Activated CD4-positive, alpha-beta memory T cell treated with anti-CD3 and anti-CD28 coated beads, Interleukin-2, amount 10 ng/mL, durations not matched to agents 7 days and 5 days (primary cell): ENCODE measurements at regions of chr17 and their contacts with region 1.

Region 1: GRCh38 chr17:2380226-2380922 is 20.5 kb downstream of the MNT start:
- DNase-seq: no peak
- H3K4me3 Mint-ChIP-seq: no peak overlapping the region
- H3K27ac Mint-ChIP-seq: no peak overlapping the region
- H3K4me1 Mint-ChIP-seq: no peaks in the 10 kb centered on the region
- H3K27me3 Mint-ChIP-seq: no peaks in the 10 kb centered on the region

Region 2: DNA sequence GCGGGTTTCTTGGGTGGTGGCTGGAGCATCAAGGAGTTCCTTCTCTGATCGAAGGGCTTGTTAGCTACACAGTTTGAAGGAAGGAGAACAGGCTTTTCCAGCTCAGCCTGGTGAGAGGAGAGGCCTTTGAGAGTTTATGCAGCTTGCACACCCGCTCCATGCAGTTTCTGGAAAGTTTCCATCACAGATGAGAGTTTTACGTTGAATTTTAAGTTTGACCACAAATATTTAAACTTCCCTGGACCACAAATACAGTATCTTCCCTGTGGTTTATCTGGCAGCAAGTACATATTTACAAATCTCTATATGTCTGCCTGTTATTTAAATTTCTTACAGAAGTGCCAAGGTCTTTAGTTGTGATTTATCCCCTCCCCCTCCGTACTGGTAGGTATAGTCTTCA is 268.7 kb before region 1 on chr17:
- CTCF ChIA-PET with region 1: no interaction called
- POLR2A ChIA-PET with region 1: no interaction called
- DNase-seq: no peak
- H3K4me3 Mint-ChIP-seq: no peak overlapping the region
- H3K27ac Mint-ChIP-seq: no peak overlapping the region
- H3K4me1 Mint-ChIP-seq: peaks cover 8% of the 10 kb centered on the region
- H3K27me3 Mint-ChIP-seq: no peaks in the 10 kb centered on the region

Region 3: GRCh38 chr17:2253768-2254406 is 126.5 kb before region 1 on chr17:
- CTCF ChIA-PET with region 1: no interaction called
- POLR2A ChIA-PET with region 1: no interaction called
- DNase-seq: peak; percentile 54
- H3K4me3 Mint-ChIP-seq: peak overlapping the region; percentile 14
- H3K27ac Mint-ChIP-seq: peak overlapping the region; percentile 89
- H3K4me1 Mint-ChIP-seq: peaks cover 74% of the 10 kb centered on the region
- H3K27me3 Mint-ChIP-seq: no peaks in the 10 kb centered on the region

Region 4: DNA sequence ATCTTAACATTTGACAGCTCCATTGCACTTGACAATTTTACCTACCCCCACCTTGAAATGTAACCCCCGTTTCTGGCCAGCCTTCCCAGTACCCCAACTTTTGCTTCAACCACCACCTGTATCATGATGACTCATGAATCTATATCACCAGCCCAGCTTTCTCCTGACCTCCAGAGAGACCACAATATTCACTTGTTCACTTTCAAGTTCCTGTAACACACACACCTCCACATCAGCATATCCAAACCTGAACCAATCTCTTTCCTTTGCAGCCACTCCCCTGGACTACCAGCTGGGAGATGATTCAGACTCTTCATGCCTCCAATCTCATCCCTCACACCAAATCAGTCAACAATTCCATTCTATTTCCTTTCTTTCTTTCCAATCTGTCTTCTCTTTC is 84.8 kb before region 1 on chr17:
- CTCF ChIA-PET with region 1: no interaction called
- POLR2A ChIA-PET with region 1: no interaction called
- DNase-seq: no peak
- H3K4me3 Mint-ChIP-seq: no peak overlapping the region
- H3K27ac Mint-ChIP-seq: peak overlapping the region; percentile 1
- H3K4me1 Mint-ChIP-seq: peaks cover 33% of the 10 kb centered on the region
- H3K27me3 Mint-ChIP-seq: no peaks in the 10 kb centered on the region

Region 5: DNA sequence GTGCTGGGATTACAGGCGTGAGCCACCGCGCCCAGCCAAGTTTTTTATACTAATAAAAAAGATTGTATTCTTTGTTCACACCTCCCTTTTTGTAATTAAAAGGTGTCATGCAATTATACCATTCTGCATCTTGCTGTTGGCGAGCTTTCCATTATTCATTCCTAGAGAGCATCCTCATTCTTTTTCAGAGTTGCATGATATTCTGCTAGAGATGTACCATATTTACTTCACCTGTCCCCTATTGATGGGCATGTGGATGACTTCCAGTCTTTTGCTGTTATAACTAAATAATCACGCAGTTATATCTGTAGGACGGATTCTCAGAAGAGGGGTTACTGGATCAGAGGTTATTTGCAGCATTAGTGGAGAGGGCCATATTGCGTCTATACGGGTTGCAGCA is 26.1 kb before region 1 on chr17:
- CTCF ChIA-PET with region 1: interaction called, 16 read pairs
- POLR2A ChIA-PET with region 1: interaction called, 3 read pairs
- DNase-seq: no peak
- H3K4me3 Mint-ChIP-seq: no peak overlapping the region
- H3K27ac Mint-ChIP-seq: peak overlapping the region; percentile 79
- H3K4me1 Mint-ChIP-seq: peaks cover 17% of the 10 kb centered on the region
- H3K27me3 Mint-ChIP-seq: no peaks in the 10 kb centered on the region

Region 6: DNA sequence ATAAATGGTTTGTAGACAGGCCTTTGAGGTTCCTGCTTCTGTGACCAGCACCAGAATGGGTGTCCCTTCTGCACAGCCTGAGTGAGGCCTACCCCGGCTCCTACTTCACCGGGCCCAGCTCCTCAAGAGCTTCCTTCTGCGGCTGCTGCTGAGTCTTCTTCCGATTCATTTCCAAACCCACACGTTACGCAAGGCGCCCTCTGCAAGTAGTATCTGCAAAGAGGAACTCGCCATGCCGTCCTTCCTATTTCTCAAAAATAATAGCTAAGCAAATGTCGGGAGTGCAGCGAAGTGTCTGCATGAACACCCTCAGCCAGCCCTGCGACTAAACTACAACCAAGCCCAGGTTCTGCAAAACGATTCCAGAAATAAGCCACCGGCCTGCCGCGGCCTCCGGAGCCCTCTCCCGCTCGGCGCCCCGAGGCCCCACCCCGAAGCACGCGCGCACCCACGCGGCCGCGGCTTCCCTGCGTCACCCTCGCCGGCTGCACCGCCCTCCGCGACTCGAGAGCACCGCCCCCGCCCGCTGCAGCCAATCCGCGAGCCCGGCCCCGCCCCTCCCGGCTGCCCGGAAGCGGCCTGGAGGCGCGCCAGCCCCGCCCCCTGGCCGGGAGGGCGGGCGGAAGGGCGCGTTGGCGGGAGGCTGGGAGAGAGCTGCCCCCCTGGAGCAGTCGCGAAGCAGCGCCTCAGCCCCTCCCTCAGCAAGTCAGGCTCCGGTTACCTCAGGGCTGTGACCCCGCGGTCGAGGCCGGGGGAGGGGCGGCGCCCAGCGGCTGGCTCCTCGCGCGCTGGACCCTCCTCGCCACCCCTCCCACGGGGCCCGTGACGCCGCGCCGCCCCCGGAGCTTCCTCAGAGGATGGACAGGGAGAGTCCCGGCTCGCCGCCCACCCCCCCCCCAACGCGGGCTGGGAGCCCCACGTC is 12.1 kb after region 1 on chr17:
- CTCF ChIA-PET with region 1: interaction called, 61 read pairs
- POLR2A ChIA-PET with region 1: interaction called, 51 read pairs
- DNase-seq: peak; percentile 97
- H3K4me3 Mint-ChIP-seq: peak overlapping the region; percentile 90
- H3K27ac Mint-ChIP-seq: peak overlapping the region; percentile 90
- H3K4me1 Mint-ChIP-seq: peaks cover 67% of the 10 kb centered on the region
- H3K27me3 Mint-ChIP-seq: no peaks in the 10 kb centered on the region

Region 7: GRCh38 chr17:2401426-2402221 is 21.2 kb after region 1 on chr17:
- CTCF ChIA-PET with region 1: interaction called, 73 read pairs
- POLR2A ChIA-PET with region 1: interaction called, 68 read pairs
- DNase-seq: peak; percentile 100
- H3K4me3 Mint-ChIP-seq: peak overlapping the region; percentile 97
- H3K27ac Mint-ChIP-seq: peak overlapping the region; percentile 99
- H3K4me1 Mint-ChIP-seq: peaks cover 55% of the 10 kb centered on the region
- H3K27me3 Mint-ChIP-seq: no peaks in the 10 kb centered on the region

Region 8: GRCh38 chr17:2416010-2416734 is 35.8 kb after region 1 on chr17:
- CTCF ChIA-PET with region 1: interaction called, 425 read pairs
- POLR2A ChIA-PET with region 1: interaction called, 60 read pairs
- DNase-seq: peak; percentile 88
- H3K4me3 Mint-ChIP-seq: no peak overlapping the region
- H3K27ac Mint-ChIP-seq: no peak overlapping the region
- H3K4me1 Mint-ChIP-seq: peaks cover 2% of the 10 kb centered on the region
- H3K27me3 Mint-ChIP-seq: no peaks in the 10 kb centered on the region

Region 9: DNA sequence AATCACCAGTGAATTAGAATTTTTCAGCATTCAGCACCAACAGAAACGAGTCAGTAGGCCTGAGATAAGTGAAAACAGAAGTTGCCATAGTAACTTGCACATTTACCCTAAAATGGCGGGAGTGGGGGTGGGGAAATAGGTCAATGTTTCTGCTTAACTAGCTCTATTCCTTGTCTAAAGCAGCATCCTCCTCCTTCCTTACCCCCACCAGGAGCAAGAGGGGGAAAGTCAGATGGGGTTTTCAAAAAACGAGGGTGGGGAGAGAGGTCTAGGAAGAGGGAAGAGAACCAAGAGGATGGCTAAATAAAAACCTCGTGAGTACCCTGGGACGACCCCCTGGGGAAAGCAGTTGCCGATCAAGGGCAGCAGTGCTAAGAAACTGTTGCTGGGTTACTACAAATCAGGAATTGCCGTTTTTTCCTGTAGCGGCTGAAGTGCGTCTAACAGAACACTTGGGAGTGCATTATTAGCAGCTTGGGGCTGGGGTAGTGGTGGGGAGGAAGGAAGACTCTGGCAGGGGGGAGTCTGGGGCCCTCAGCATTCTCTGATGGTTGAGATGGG is 54.9 kb after region 1 on chr17:
- CTCF ChIA-PET with region 1: interaction called, 18 read pairs
- POLR2A ChIA-PET with region 1: interaction called, 4 read pairs
- DNase-seq: no peak
- H3K4me3 Mint-ChIP-seq: no peak overlapping the region
- H3K27ac Mint-ChIP-seq: no peak overlapping the region
- H3K4me1 Mint-ChIP-seq: peaks cover 7% of the 10 kb centered on the region
- H3K27me3 Mint-ChIP-seq: no peaks in the 10 kb centered on the region

Region 10: DNA sequence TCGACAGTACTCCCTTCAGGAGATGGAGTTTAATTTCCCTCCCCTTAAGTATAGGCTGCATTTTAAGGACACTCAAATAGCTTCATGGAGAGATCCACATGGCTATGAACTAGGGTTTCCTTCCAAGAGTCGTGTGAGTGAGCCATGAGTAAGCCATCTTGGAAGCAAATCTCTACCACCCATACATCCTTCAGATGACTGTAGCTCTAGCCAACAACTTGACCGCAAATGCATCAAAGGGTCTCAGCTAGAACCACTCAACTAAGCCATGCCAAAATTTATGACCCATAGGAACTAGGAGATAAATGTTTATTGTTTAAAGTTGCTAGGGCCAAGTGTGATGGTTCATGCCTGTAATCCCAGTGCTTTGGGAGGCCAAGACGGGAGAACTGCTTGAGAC is 87.9 kb after region 1 on chr17:
- CTCF ChIA-PET with region 1: no interaction called
- POLR2A ChIA-PET with region 1: no interaction called
- DNase-seq: no peak
- H3K4me3 Mint-ChIP-seq: no peak overlapping the region
- H3K27ac Mint-ChIP-seq: no peak overlapping the region
- H3K4me1 Mint-ChIP-seq: peaks cover 1% of the 10 kb centered on the region
- H3K27me3 Mint-ChIP-seq: no peaks in the 10 kb centered on the region

Region 11: GRCh38 chr17:2680961-2681360 is 300.6 kb after region 1 on chr17:
- CTCF ChIA-PET with region 1: interaction called, 16 read pairs
- POLR2A ChIA-PET with region 1: no interaction called
- DNase-seq: no peak
- H3K4me3 Mint-ChIP-seq: no peak overlapping the region
- H3K27ac Mint-ChIP-seq: no peak overlapping the region
- H3K4me1 Mint-ChIP-seq: no peaks in the 10 kb centered on the region
- H3K27me3 Mint-ChIP-seq: no peaks in the 10 kb centered on the region